Naive thymus-derived CD4-positive, alpha-beta T cell (primary cell): ENCODE measurements at regions of chr11 and their contacts with region 1.

Region 1: GRCh38 chr11:125141686-125142535 is 22.6 kb upstream of the PKNOX2 start:
- DNase-seq: peak; percentile 21 to 73 (median 48)
- ATAC-seq: peak; percentile 95
- H3K4me3 ChIP-seq: no peak overlapping the region
- H3K4me3 Mint-ChIP-seq: peak overlapping the region in 3 of 10 donors; percentile 10 to 49 (median 20)
- H3K27ac ChIP-seq: no peak overlapping the region
- H3K27ac Mint-ChIP-seq: no peak overlapping the region
- H3K4me1 ChIP-seq: no peaks in the 10 kb centered on the region
- H3K4me1 Mint-ChIP-seq: peaks cover 0 to 6% (median 5%) of the 10 kb centered on the region in 7 donors
- H3K27me3 ChIP-seq: peaks cover 0 to 5% of the 10 kb centered on the region in 2 donors
- H3K27me3 Mint-ChIP-seq: peaks cover 15 to 47% (median 27%) of the 10 kb centered on the region in 5 donors

Region 2: DNA sequence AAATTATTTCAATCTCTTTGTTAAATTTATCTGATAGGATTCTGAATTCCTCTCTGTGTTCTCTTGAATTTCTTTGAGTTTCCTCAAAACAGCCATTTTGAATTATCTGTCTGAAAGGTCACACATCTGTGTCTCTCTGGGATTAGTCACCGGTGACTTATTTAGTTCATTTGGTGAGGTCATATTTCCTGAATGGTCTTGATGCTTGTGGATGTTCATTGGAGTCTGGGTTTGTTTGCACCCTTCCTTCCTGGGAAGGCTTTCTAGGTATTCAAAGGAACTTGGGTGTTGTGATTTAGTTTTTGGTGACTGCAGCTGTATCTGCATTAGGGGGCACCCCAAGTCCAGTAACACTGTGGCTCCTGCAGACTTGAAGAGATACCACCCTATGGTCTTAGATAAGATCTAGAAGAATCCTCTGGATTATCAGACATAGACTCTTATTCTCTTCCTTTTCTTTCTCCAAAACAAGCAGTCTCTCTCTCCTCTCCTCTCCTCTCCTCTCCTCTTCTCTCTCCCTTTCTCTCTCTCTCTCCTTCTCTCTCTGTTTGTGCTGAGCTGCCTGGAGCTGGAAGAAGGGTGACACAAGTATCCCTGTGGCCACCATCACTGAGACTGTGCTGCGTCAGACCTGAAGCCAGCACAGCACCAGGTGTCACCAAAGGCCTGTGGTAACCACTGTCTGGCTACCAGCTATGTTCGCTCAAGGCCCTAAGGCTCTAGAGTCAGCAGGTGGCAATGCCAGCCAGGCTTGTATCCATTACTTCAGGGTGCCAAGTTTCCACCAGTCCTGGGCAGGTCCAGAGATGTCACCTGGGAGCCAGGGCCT is 226.2 kb before region 1 on chr11:
- CTCF ChIA-PET with region 1: interaction called, 8 read pairs
- POLR2A ChIA-PET with region 1: no interaction called
- intact Hi-C with region 1: loop called in 1 of 2 experiments (anchors 1 kb)
- DNase-seq: peak in 2 of 9 donors; percentile 19 to 24
- ATAC-seq: no peak
- H3K4me3 ChIP-seq: no peak overlapping the region
- H3K4me3 Mint-ChIP-seq: no peak overlapping the region
- H3K27ac ChIP-seq: no peak overlapping the region
- H3K27ac Mint-ChIP-seq: peak overlapping the region in 1 of 9 donors; percentile 72
- H3K4me1 ChIP-seq: no peaks in the 10 kb centered on the region
- H3K4me1 Mint-ChIP-seq: peaks cover 0 to 11% (median 5%) of the 10 kb centered on the region in 7 donors
- H3K27me3 ChIP-seq: no peaks in the 10 kb centered on the region
- H3K27me3 Mint-ChIP-seq: peaks cover 0 to 21% (median 0%) of the 10 kb centered on the region in 5 donors

Region 3: GRCh38 chr11:125123947-125124617 is 17.8 kb before region 1 on chr11:
- CTCF ChIA-PET with region 1: interaction called, 18 read pairs
- POLR2A ChIA-PET with region 1: interaction called, 3 read pairs
- intact Hi-C with region 1: no loop called
- DNase-seq: peak in 5 of 9 donors; percentile 16 to 29 (median 20)
- ATAC-seq: peak; percentile 78
- H3K4me3 ChIP-seq: no peak overlapping the region
- H3K4me3 Mint-ChIP-seq: no peak overlapping the region
- H3K27ac ChIP-seq: no peak overlapping the region
- H3K27ac Mint-ChIP-seq: no peak overlapping the region
- H3K4me1 ChIP-seq: no peaks in the 10 kb centered on the region
- H3K4me1 Mint-ChIP-seq: peaks cover 0 to 8% (median 0%) of the 10 kb centered on the region in 7 donors
- H3K27me3 ChIP-seq: peaks cover 0 to 7% of the 10 kb centered on the region in 2 donors
- H3K27me3 Mint-ChIP-seq: peaks cover 26 to 45% (median 43%) of the 10 kb centered on the region in 5 donors